ENCODE measurements at regions of chr2 and their contacts with region 1.

Region 1: DNA sequence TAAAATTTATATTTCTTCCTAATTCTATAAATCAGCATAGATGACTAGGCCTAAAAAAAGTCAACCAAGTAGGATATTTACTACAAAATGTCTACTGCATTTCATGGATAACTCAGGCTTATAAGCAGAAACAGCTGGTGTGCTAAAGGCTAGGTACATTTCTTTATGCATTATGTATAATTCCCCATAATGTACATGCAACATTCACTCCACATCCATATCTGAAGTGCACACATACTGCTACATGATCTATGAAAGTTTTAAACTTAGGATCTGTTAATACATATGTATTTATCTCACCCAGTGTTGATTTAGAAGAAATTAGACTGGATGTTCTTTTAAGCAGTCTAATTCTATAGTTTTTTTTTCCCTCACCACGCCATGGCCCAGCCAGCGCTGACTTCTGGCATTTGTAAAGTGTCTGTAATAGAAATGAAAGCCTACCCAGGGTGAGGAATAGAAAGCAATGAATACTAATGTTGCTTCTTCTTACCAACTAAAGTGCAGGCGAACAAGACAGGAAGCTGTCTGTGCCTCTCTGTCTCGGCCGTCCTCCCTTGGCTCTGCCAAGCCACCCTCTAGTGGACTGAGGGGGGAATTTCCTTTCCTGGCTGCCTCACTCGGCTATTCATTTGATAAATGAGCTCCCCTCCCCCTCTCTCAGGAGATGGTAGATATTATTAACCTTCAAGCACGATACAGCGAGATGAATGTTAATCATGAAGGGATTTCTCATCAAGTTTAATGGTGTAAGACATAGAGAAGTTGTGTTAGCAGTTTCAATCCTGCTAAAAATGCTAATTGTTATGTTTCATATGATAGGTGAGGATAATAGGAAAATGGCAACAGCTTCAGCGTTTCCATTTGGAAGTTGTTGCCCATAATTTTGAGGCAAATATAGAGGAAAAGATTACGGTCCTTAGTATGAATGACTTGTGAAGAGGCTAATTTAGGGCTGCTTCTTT is 384.5 kb downstream of the MTX2 start:
- DNase-seq: peak; percentile 65
- H3K27ac ChIP-seq: no peak overlapping the region
- CTCF ChIP-seq: peak; percentile 86

Region 2: GRCh38 chr2:176126929-176127773 is 526.6 kb before region 1 on chr2:
- CTCF ChIA-PET with region 1: interaction called, 42 read pairs
- POLR2A ChIA-PET with region 1: no interaction called
- DNase-seq: no peak
- H3K27ac ChIP-seq: no peak overlapping the region
- CTCF ChIP-seq: peak; percentile 89

Region 3: DNA sequence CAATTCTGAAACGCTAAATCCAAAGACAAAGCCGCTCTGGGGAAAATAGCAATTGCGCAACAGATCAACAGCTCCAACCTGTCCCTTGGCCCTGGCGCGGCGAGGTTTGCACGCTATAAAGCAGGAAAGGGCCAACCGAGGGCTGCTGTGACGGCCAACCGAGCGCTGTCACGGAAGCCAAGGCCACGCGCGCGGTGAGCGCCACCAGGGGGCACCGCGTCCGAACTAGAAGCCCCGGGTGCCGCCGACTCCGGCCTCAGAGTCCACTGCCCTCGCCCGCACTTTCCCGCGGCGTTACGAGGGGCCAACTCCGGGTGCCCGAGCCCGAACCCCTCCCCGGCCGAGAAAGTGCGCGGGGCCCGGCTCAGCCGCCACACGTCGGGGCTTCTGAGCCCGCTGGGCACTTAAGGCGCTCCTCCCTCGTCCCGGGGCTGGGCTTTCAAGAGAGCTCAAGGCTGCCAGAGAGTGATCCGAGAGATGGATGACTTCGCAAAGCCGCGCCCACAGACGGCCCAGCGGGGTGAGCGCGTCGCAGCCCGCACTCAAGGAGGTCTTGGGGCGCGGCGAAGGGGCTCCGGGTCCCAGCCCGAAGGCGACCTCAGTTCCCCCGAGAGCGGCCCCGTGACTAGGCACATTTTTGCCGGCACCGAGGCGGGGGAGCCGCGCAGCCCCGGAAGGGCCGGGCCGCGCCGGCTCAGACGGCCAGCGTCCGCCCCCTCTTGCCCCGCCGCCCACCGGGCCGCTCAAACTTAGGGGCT is 609.9 kb after region 1 on chr2:
- CTCF ChIA-PET with region 1: no interaction called
- POLR2A ChIA-PET with region 1: no interaction called
- DNase-seq: peak; percentile 86
- H3K27ac ChIP-seq: peak overlapping the region; percentile 100
- CTCF ChIP-seq: peak; percentile 86